ENCODE measurements at regions of chr14 and their contacts with region 1.

Region 1: GRCh38 chr14:22646570-22647254 is 2.6 kb upstream of the OR6J1 start:
- DNase-seq: no peak
- ATAC-seq: no peak
- H3K4me3 ChIP-seq: no peak overlapping the region
- H3K27ac ChIP-seq: no peak overlapping the region
- H3K4me1 ChIP-seq: peaks cover 0 to 3% of the 10 kb centered on the region in 2 experiments; a peak in 3 of 5 replicates
- H3K27me3 ChIP-seq: no peaks in the 10 kb centered on the region
- CTCF ChIP-seq: no peak
- EP300 ChIP-seq: no peak
- POLR2A ChIP-seq: no peak
- RAD21 ChIP-seq: no peak

Region 2: GRCh38 chr14:22570132-22570949 is 76.4 kb before region 1 on chr14:
- CTCF ChIA-PET with region 1: interaction called, 6 read pairs
- POLR2A ChIA-PET with region 1: interaction called, 3 read pairs
- in situ Hi-C with region 1: loop called (anchors 5 kb)
- intact Hi-C with region 1: no loop called
- DNase-seq: peak; percentile 71 to 89 (median 76)
- ATAC-seq: peak; percentile 95
- H3K4me3 ChIP-seq: no peak overlapping the region
- H3K27ac ChIP-seq: no peak overlapping the region
- H3K4me1 ChIP-seq: no peaks in the 10 kb centered on the region
- H3K27me3 ChIP-seq: no peaks in the 10 kb centered on the region
- CTCF ChIP-seq: peak; percentile 77 to 99 (median 95)
- EP300 ChIP-seq: no peak
- POLR2A ChIP-seq: no peak
- RAD21 ChIP-seq: peak; percentile 86 to 91

Region 3: GRCh38 chr14:22589096-22589839 is 57.4 kb before region 1 on chr14 and contains the start of gene DAD1:
- CTCF ChIA-PET with region 1: no interaction called
- POLR2A ChIA-PET with region 1: interaction called, 4 read pairs
- in situ Hi-C with region 1: no loop called
- intact Hi-C with region 1: loop called (anchors 5 kb)
- DNase-seq: peak; percentile 96 to 99 (median 97)
- ATAC-seq: peak; percentile 96
- H3K4me3 ChIP-seq: peak within 1 kb of the TSS; percentile 65
- H3K27ac ChIP-seq: peak within 1 kb of the TSS; percentile 87
- H3K4me1 ChIP-seq: peaks cover 9 to 30% of the 10 kb centered on the region in 2 experiments
- H3K27me3 ChIP-seq: no peaks in the 10 kb centered on the region
- CTCF ChIP-seq: no peak
- EP300 ChIP-seq: no peak; the same call in 1 of the 2 replicates
- POLR2A ChIP-seq: peak; percentile 91
- RAD21 ChIP-seq: 0 out of 4 replicates have a peak, but pooled peaks of 1 of the 2 experiments have one; percentile 6
- polyA plus RNA-seq, gene DAD1: 585 to 617 TPM

Region 4: DNA sequence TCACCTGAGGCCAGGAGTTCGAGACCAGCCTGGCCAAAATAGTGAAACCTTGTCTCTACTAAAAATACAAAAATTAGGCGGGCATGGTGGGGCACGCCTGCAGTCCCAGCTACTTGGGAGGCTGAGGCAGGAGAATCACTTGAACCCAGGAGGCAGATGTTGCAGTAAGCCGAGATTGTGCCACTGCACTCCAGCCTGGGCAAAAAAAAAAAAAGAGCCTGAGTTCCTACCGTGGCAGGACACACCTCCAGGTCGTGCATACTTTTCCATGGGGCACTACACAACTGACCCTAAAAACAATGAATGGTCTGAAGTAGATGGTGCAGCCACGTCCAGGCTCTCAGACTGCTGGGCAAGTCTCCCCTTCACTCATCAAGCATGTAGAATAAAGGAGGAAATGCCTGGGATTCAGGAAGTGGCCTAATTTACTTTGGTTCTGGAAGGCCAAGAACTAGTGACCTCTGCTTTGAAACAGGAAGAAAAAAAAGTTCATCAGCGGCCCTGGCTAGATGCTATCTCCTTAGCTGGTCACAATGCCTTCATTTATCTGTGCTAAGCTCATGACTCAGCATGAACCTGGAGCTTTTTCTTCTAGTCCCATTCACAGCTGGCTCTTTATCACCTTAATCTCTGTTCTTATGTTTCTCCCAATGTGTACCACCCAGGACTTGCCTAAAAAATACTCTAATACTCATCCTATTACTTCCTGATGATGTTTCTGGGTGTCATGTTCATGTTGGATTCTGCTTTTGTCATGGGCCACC is 53.3 kb after region 1 on chr14:
- CTCF ChIA-PET with region 1: no interaction called
- POLR2A ChIA-PET with region 1: no interaction called
- in situ Hi-C with region 1: no loop called
- intact Hi-C with region 1: no loop called
- DNase-seq: peak; percentile 58 to 77 (median 62)
- ATAC-seq: peak; percentile 82
- H3K4me3 ChIP-seq: no peak overlapping the region
- H3K27ac ChIP-seq: peak overlapping the region; percentile 65
- H3K4me1 ChIP-seq: peaks cover 9 to 22% of the 10 kb centered on the region in 2 experiments; a peak in 4 of 5 replicates
- H3K27me3 ChIP-seq: no peaks in the 10 kb centered on the region
- CTCF ChIP-seq: no peak
- EP300 ChIP-seq: peak; percentile 79
- POLR2A ChIP-seq: no peak
- RAD21 ChIP-seq: no peak

Region 5: GRCh38 chr14:22814941-22815713 is 168.4 kb after region 1 on chr14 and contains the start of gene SLC7A7:
- CTCF ChIA-PET with region 1: no interaction called
- POLR2A ChIA-PET with region 1: no interaction called
- in situ Hi-C with region 1: no loop called
- intact Hi-C with region 1: no loop called
- DNase-seq: no peak
- ATAC-seq: peak; percentile 19
- H3K4me3 ChIP-seq: no peak within 1 kb of the TSS
- H3K27ac ChIP-seq: no peak within 1 kb of the TSS
- H3K4me1 ChIP-seq: peaks cover 3 to 5% of the 10 kb centered on the region in 2 experiments; a peak in 3 of 5 replicates
- H3K27me3 ChIP-seq: peaks cover 7 to 32% of the 10 kb centered on the region in 2 experiments; a peak in 4 of 5 replicates
- CTCF ChIP-seq: no peak
- EP300 ChIP-seq: no peak
- POLR2A ChIP-seq: no peak
- RAD21 ChIP-seq: no peak
- polyA plus RNA-seq, gene SLC7A7: 0.24 to 0.32 TPM

Region 6: GRCh38 chr14:23120541-23121251 is 474.0 kb after region 1 on chr14:
- CTCF ChIA-PET with region 1: no interaction called
- POLR2A ChIA-PET with region 1: no interaction called
- in situ Hi-C with region 1: no loop called
- intact Hi-C with region 1: no loop called
- DNase-seq: peak; percentile 87 to 94 (median 88)
- ATAC-seq: peak; percentile 92
- H3K4me3 ChIP-seq: no peak overlapping the region
- H3K27ac ChIP-seq: no peak overlapping the region
- H3K4me1 ChIP-seq: peaks cover 51 to 58% of the 10 kb centered on the region in 2 experiments
- H3K27me3 ChIP-seq: no peaks in the 10 kb centered on the region
- CTCF ChIP-seq: peak; percentile 100
- EP300 ChIP-seq: peak; percentile 71
- POLR2A ChIP-seq: no peak
- RAD21 ChIP-seq: peak; percentile 100

Measured in K562 (cell line).